Calu3 (cell line): ENCODE measurements at regions of chr22 and their contacts with region 1.

Region 1: DNA sequence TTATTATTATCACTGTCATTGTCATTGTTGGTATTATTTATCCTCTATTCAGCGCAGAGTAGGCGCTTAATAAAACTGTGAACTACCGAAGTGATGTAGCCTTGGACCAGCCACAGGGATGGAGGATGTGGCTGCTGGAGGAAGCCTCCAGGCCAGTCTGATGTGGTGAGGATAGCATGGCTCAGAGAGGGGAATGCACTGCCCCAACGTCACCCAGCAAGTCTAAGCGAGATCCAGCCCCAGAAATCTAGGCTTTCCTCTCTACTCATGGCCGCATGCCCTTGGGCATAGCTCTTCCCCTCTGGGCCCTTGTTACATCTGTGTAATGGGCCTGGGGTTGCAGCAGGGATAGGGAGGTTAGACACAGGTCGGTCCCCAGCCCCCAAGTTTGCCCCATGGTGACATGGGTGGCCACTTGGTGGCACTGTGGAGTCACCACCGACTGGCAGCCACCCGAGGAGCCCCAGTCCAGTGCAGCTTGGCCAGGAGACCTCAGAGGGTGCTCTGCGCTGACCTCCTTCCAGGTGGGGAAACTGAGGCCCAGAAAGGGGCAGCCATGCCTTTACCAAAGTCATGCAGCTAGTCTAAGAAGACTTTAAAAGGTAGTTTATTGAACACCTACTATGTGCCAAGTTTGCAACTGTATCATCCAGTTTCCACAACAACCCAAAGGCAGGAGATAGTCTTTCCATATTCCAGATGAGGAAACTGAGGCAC is 395.7 kb downstream of the MN1 start:
- DNase-seq: peak; percentile 84
- H3K4me3 Mint-ChIP-seq: no peak overlapping the region
- H3K27ac Mint-ChIP-seq: no peak overlapping the region
- H3K4me1 Mint-ChIP-seq: no peaks in the 10 kb centered on the region
- H3K27me3 Mint-ChIP-seq: peaks cover 24% of the 10 kb centered on the region
- CTCF ChIP-seq: peak; percentile 91

Region 2: DNA sequence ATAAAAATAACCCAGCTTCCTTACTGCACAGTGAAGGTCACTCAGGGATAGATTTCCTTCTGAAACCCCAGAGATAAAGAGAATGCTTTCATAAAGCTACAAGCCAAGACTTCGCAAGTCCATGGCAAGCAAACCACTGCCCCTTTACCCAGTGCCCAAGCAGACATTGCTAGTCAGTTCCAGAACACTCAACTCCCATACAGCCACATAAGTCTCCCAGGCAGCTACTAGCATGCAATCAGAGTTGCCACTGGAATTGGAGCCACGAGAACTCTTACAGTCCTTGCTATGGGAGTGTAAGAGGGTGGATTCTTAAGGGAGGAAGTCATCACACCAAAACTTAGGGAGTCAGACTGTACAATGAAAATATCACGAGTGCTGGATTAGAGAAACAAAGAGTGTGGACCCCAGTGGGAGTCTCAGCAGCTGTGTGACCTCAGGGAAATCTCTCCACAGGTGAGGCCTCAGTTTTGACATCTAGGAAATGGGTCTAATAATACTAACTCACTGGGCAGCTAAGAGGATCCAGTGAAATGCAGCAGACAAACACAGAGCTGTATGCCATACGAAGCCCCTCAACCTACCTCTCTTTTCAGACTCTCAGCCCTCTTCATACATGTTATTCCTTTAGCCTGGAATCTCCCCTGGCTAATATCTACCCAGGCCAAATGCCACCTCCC is 130.9 kb before region 1 on chr22:
- CTCF ChIA-PET with region 1: no interaction called
- intact Hi-C with region 1: no loop called
- DNase-seq: no peak
- H3K4me3 Mint-ChIP-seq: no peak overlapping the region
- H3K27ac Mint-ChIP-seq: no peak overlapping the region
- H3K4me1 Mint-ChIP-seq: peaks cover 17% of the 10 kb centered on the region
- H3K27me3 Mint-ChIP-seq: peaks cover 59% of the 10 kb centered on the region
- CTCF ChIP-seq: no peak

Region 3: GRCh38 chr22:27617214-27617881 is 211.5 kb after region 1 on chr22:
- CTCF ChIA-PET with region 1: interaction called, 3 read pairs
- intact Hi-C with region 1: loop called (anchors 5 kb)
- DNase-seq: no peak
- H3K4me3 Mint-ChIP-seq: no peak overlapping the region
- H3K27ac Mint-ChIP-seq: no peak overlapping the region
- H3K4me1 Mint-ChIP-seq: peaks cover 23% of the 10 kb centered on the region
- H3K27me3 Mint-ChIP-seq: peaks cover 65% of the 10 kb centered on the region
- CTCF ChIP-seq: peak; percentile 32